BJ (cell line): ENCODE measurements at regions of chr11 and their contacts with region 1.

Region 1: GRCh38 chr11:5369793-5370192 is 13.8 kb upstream of the OR51M1 start:
- DNase-seq: no peak
- H3K4me3 ChIP-seq: no peak overlapping the region
- H3K27me3 ChIP-seq: no peaks in the 10 kb centered on the region
- CTCF ChIP-seq: peak; percentile 61

Region 2: GRCh38 chr11:5123802-5124521 is 245.8 kb before region 1 on chr11:
- CTCF ChIA-PET with region 1: interaction called, 10 read pairs
- POLR2A ChIA-PET with region 1: no interaction called
- DNase-seq: peak; percentile 9
- H3K4me3 ChIP-seq: no peak overlapping the region
- H3K27me3 ChIP-seq: no peaks in the 10 kb centered on the region
- CTCF ChIP-seq: peak; percentile 87